SK-MEL-5 (cell line): ENCODE measurements at regions of chrX and their contacts with region 1.

Region 1: GRCh38 chrX:152821145-152821765 is 9.3 kb downstream of the CETN2 start:
- DNase-seq: peak; percentile 60

Region 2: DNA sequence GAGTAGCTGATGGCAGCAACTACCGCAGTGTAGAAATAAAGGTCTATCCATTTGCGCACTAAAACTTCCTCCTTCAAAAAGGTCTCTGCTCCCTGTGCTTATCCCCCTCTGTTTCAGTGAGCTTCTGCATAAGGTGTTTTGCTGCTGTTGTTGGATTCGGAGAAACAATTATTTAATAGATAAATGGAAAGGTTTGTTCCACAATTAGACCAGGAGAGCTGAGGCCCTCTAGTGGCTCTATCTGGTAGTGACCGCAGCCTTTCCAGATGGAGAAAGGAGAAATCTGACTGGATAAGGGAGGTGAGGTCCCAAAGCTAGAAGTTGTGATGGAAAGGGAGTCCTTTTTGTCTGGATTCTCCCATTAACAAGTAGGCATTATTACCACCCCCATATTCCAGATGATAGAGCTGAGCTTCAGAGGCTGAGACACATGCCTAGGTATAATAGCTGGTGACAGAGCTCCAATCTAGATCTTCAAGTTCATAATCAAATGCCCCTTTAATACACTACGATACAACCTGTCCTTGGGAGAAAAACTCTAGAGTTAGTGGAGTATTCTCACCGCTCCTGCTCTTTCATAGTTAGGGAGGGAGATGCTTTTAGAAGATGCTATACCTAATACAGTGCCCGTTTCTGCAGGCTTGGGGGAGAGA is 188.7 kb before region 1 on chrX:
- in situ Hi-C with region 1: loop called (anchors 25 kb)
- DNase-seq: peak; percentile 59

Region 3: GRCh38 chrX:152878976-152879755 is 57.9 kb after region 1 on chrX:
- in situ Hi-C with region 1: no loop called
- DNase-seq: no peak

Region 4: DNA sequence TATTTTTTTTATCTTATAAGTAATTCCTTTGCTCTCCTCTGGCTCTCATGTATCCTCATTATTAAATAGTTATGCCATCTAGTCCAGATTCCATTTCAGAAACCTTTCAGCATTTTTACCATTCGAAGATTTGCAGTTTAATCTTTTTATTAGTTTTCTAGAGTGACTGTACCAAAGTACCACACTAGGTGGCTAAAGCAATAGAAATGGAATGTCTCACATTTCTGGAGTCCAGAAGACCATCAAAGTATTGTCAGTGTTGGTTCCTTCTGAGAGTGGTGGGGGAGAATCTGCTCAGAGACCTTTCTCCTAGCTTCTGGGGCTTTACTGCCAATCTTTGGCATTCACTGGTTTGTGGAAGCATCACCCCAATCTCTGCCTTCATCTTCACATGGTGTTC is 231.3 kb after region 1 on chrX:
- in situ Hi-C with region 1: no loop called
- DNase-seq: no peak